CD4-positive, alpha-beta memory T cell (primary cell): ENCODE measurements at regions of chr1 and their contacts with region 1.

Region 1: DNA sequence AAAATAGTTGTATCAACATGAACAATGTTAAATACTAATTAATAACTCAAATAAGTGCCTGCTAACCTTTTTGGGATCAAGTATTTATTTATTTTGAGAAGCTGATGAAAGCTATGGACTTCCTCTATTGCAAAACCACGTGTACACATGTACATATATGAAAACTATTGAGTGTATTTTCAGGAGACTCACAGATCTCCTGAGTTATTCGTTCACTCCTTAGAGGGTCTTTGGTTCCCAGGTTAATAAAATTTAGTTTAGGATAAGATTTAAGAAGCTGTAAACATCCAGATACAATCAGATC is 130.5 kb downstream of the DISC1 start:
- DNase-seq: no peak
- H3K4me3 ChIP-seq: no peak overlapping the region
- H3K4me3 Mint-ChIP-seq: no peak overlapping the region
- H3K27ac ChIP-seq: no peak overlapping the region
- H3K27ac Mint-ChIP-seq: no peak overlapping the region
- H3K4me1 ChIP-seq: no peaks in the 10 kb centered on the region
- H3K4me1 Mint-ChIP-seq: peaks cover 0 to 4% (median 0%) of the 10 kb centered on the region in 4 donors
- H3K27me3 ChIP-seq: no peaks in the 10 kb centered on the region
- H3K27me3 Mint-ChIP-seq: no peaks in the 10 kb centered on the region

Region 2: GRCh38 chr1:231626535-231626945 is 130.5 kb before region 1 on chr1 and contains the start of gene DISC1:
- CTCF ChIA-PET with region 1: interaction called, 10 read pairs
- POLR2A ChIA-PET with region 1: no interaction called
- intact Hi-C with region 1: no loop called
- DNase-seq: peak; percentile 66 to 79 (median 71)
- H3K4me3 ChIP-seq: peak within 1 kb of the TSS; percentile 43 to 79
- H3K4me3 Mint-ChIP-seq: peak within 1 kb of the TSS; percentile 94 to 100 (median 96)
- H3K27ac ChIP-seq: peak within 1 kb of the TSS; percentile 63
- H3K27ac Mint-ChIP-seq: peak within 1 kb of the TSS; percentile 91 to 98 (median 96)
- H3K4me1 ChIP-seq: peaks cover 32% of the 10 kb centered on the region
- H3K4me1 Mint-ChIP-seq: peaks cover 20 to 47% (median 33%) of the 10 kb centered on the region in 4 donors
- H3K27me3 ChIP-seq: no peaks in the 10 kb centered on the region
- H3K27me3 Mint-ChIP-seq: peaks cover 0 to 2% of the 10 kb centered on the region in 2 donors
- total RNA-seq, gene DISC1: 15.5 to 18.0 TPM

Region 3: GRCh38 chr1:231738554-231738953 is 18.5 kb before region 1 on chr1:
- CTCF ChIA-PET with region 1: interaction called, 19 read pairs
- POLR2A ChIA-PET with region 1: no interaction called
- intact Hi-C with region 1: no loop called
- DNase-seq: no peak
- H3K4me3 ChIP-seq: no peak overlapping the region
- H3K4me3 Mint-ChIP-seq: no peak overlapping the region
- H3K27ac ChIP-seq: no peak overlapping the region
- H3K27ac Mint-ChIP-seq: no peak overlapping the region
- H3K4me1 ChIP-seq: no peaks in the 10 kb centered on the region
- H3K4me1 Mint-ChIP-seq: peaks cover 0 to 10% (median 3%) of the 10 kb centered on the region in 4 donors
- H3K27me3 ChIP-seq: no peaks in the 10 kb centered on the region
- H3K27me3 Mint-ChIP-seq: no peaks in the 10 kb centered on the region

Region 4: DNA sequence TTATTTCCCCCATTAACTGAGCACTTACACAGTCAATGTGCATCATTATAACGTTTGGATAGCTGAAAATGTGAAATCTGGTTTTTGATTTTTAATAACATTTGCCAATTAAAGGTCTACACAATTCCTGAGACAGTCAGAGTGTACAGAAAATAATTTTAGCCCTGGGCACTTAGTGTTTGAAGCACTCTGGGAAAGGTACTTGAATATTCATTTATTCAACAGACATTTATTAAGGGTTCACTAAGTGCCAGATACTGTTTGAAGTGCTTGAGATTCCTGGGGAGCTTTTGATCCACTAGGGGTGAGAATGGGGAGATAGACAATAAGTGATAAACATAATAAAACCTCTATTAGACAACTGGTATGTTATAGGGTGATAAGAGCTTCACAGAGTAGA is 11.4 kb after region 1 on chr1:
- CTCF ChIA-PET with region 1: interaction called, 47 read pairs
- POLR2A ChIA-PET with region 1: no interaction called
- intact Hi-C with region 1: no loop called
- DNase-seq: no peak
- H3K4me3 ChIP-seq: no peak overlapping the region
- H3K4me3 Mint-ChIP-seq: no peak overlapping the region
- H3K27ac ChIP-seq: no peak overlapping the region
- H3K27ac Mint-ChIP-seq: no peak overlapping the region
- H3K4me1 ChIP-seq: no peaks in the 10 kb centered on the region
- H3K4me1 Mint-ChIP-seq: peaks cover 0 to 2% (median 1%) of the 10 kb centered on the region in 4 donors
- H3K27me3 ChIP-seq: no peaks in the 10 kb centered on the region
- H3K27me3 Mint-ChIP-seq: no peaks in the 10 kb centered on the region

Region 5: DNA sequence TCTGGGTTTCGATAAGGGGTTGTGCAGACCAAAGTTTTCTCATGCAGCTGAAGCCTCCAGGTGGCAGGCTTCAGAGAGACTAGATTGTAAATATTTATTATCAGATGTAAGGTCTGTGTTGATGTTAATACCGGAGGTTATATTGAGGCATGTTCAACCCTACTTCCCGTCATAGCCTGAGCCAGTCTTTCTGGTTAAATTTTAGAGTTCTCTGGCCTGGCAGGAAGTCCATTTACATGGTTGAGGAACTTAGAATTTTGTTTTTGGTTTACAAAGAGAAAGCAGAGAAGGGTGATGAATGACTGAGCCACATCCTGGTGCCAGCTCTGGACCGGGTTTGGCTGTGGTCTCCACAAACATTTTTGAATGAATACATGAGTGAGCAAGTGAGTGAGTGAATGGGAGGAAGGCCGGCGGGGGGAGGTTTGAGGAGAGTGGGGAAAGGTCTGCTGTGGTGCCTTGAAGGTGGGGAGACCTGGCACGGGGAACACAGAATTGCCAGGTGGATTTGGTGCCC is 88.0 kb after region 1 on chr1:
- CTCF ChIA-PET with region 1: no interaction called
- POLR2A ChIA-PET with region 1: no interaction called
- intact Hi-C with region 1: no loop called
- DNase-seq: no peak
- H3K4me3 ChIP-seq: no peak overlapping the region
- H3K4me3 Mint-ChIP-seq: peak overlapping the region in 1 of 8 donors; percentile 13
- H3K27ac ChIP-seq: no peak overlapping the region
- H3K27ac Mint-ChIP-seq: peak overlapping the region in 3 of 7 donors; percentile 0 to 87 (median 44)
- H3K4me1 ChIP-seq: no peaks in the 10 kb centered on the region
- H3K4me1 Mint-ChIP-seq: peaks cover 9 to 23% (median 14%) of the 10 kb centered on the region in 4 donors
- H3K27me3 ChIP-seq: no peaks in the 10 kb centered on the region
- H3K27me3 Mint-ChIP-seq: no peaks in the 10 kb centered on the region

Region 6: DNA sequence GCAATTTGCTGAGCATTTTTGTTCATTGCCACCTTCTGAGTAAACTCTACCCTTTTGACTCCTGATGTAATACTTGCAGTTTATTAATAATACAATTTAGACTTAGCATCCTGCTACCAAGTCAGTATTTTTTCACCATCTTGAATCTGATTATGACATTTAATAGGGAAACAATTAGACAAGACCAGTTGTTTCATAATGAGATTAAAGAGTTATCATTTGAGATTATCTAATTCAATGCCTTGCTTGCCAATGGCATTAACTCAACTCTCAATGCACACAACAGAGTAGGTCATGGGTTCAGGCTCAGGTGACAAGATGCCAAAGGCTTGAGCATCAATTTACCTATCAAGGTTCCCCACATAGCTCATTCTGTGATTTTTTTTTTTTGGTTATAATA is 357.9 kb after region 1 on chr1:
- CTCF ChIA-PET with region 1: no interaction called
- POLR2A ChIA-PET with region 1: no interaction called
- intact Hi-C with region 1: no loop called
- DNase-seq: no peak
- H3K4me3 ChIP-seq: no peak overlapping the region
- H3K4me3 Mint-ChIP-seq: no peak overlapping the region
- H3K27ac ChIP-seq: no peak overlapping the region
- H3K27ac Mint-ChIP-seq: no peak overlapping the region
- H3K4me1 ChIP-seq: no peaks in the 10 kb centered on the region
- H3K4me1 Mint-ChIP-seq: no peaks in the 10 kb centered on the region
- H3K27me3 ChIP-seq: no peaks in the 10 kb centered on the region
- H3K27me3 Mint-ChIP-seq: peaks cover 7 to 16% of the 10 kb centered on the region in 2 donors